Right ventricle myocardium inferior (tissue), 1 donor: ENCODE measurements at regions of chr6 and their contacts with region 1.

Region 1: DNA sequence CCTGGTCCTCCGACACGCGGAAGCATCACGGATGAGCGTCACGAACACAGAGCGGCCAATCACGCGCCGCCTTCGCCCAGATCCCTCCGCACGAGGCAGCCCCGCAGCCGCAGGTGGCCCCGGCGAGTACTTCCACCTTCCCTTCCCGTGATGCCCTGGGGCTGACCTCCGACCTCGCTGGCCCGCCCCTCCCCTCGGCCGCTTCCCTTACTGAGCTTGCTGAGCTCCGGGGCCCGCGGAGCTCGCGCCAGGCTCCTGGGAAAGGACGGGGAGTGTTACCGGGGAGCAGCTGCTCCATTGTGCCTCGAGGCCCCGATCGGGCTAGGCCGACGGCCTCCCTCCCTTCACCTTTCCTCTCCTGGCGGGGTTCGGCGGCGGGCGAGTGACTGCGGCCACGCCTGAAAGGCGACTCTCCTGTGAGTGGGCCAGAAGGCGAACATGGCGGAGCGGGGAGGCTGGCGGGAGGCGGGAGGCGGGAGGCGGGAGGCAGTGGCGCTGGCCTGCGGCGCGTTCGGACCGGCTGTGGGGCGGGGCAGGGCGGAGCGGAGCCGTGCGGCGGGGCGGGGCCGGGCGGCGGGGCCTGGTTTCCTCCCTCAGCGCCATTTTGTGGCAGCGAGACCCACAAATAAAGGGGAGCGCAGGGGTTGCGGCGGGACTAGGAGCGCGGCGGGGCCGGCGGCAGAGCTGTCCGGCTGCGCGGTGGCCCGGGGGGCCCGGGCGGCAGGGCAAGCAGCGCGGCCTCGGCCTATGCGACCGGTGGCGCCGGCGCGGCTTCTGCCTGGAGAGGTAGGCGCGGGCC is at the start of gene WTAP:
- DNase-seq: peak; percentile 97
- ATAC-seq: peak; percentile 96
- total RNA-seq, gene WTAP: 45.9 TPM

Region 2: DNA sequence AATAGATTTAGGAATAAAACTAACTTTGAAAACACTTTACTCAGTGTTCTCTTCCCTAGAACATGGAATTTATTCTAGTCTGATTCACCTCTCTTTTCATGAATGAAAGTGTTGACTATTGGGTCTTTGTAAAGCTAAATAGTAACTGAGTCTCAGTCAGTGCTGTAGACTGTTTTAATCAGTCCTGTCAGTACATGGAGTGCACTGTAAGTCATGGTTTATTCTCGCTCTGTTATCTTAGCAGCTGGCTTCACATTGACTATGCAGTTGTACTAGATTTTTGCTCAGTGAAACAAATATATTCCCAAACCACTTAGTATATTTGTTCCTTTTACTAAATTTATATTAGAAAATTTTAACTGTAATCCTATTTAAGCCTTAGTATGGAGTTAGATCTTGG is 19.6 kb after region 1 on chr6:
- intact Hi-C with region 1: loop called (anchors 1 kb)
- DNase-seq: no peak
- ATAC-seq: peak; percentile 70

Region 3: DNA sequence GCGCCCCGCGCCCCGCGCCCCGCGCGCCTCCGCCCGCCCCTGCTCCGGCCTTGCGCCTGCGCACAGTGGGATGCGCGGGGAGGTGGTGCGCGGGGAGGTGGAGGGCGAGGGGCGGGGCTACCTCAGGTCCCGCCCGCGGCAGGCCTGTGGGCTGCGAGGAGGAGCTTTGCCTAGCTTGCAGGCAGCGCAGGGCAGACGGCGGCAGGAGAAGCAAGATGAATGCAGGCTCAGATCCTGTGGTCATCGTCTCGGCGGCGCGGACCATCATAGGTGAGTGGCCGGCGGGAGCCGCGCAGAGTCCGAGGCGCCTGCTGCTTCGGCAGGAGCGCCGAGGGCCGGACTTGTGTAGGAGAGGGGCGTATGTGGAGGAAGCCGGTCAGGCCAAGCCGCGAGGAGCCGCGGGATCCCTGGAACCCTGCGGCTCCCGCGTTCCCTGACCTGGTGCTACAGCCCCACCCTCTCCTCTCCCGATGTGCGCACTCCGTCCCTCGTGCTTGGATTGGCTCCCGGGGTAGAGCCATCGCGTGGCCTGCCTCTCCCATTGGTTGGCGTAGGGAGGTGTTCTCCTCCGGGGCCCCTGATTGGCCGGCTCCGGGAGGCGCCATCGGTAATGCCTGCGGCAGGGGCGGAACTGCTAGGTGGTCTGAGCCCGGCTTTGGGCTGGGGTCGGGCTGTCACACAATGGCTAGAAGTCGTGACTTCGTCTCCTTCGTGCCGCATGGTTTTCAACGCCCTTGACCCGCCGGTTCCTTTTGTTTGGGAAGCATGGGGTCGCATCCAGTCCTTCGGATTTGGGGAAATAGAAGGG is 35.0 kb after region 1 on chr6 and contains the start of gene ACAT2:
- intact Hi-C with region 1: loop called (anchors 2 kb)
- DNase-seq: peak; percentile 97
- ATAC-seq: peak; percentile 99
- total RNA-seq, gene ACAT2: 5.2 TPM

Region 4: DNA sequence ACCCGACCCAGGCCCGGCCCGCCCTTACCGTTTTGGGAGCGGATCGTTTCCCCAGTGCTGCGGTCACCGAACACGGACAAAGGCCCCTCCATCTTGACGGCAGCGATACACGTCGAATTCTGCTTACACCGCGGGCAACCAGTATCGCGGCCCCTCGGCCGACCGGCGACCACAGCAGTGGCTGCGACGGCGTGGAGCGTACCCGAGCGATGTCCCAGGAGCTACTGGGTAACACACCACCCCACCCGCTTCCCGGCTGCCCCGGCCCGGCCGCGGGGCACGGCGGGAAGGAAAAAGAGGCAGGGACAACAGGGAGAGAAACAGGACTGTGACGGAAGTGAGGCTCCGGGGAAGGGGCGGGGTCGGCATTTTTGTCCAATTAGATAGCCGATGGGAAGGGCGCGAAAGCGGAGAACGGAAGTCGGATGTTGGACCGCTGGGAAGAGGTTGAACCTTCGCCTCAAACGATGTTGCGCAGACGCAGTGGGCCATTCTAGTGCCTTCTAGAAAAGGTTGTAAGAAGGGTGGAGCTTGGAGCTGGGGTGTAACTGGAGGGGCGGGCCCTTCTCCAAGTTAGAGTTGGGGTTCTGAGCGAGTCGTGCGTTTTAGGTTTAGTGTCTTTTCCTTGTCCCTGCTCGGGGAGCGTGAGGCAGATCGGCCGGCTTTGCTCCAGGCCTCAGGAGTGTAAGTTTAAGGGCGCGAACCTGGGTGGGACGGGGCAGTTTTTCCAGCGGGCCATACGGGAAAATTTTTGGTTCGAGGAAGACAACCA is 62.4 kb after region 1 on chr6 and contains the start of gene TCP1:
- intact Hi-C with region 1: loop called (anchors 2 kb)
- DNase-seq: peak; percentile 100
- ATAC-seq: peak; percentile 95
- total RNA-seq, gene TCP1: 170 TPM

Region 5: GRCh38 chr6:160534050-160534696 is 807.1 kb after region 1 on chr6:
- intact Hi-C with region 1: no loop called
- DNase-seq: no peak
- ATAC-seq: peak; percentile 70